Activated naive CD4-positive, alpha-beta T cell treated with anti-CD3 and anti-CD28 coated beads for 36 hours (primary cell): ENCODE measurements at regions of chr6 and their contacts with region 1.

Region 1: DNA sequence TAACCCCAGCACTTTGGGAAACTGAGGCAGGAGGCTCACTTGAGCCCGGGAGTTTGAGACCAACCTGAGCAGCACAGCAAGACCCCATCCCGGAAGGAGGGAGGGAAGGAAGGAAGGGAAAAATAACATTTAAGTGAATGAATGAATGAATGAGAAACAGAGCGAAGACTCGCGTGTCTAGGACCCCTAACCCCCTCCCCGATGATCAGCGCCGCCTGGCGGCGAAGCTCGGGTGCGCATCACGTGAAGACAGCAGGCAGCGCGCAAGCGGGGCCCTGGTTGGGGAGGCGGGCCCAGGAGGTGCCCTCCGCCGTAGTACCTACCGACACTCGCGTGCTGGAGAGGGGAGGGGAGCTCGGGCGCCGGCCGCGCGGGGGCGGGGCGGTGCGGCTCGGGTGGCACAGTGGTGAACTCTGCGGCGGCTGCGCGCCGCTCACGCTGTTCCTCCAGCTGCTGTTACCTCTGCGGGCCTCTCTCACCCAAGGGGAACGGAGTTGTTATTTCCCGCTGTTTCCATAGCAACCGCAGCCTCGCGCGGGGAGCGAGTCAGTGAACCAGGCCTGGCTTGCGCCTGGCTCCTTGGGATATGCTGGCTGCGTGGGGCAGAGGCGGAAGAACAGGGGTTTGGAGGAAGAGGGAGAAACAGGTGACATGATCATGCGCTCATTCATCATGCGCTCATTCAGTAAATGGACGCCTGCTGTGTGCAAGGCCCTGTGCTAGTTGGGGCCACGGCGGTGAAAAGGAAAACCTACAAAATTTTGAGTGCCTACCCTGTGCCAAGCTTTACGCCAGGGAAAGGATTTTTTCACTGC is 2.0 kb upstream of the DCDC2 start:
- DNase-seq: peak; percentile 93
- H3K4me3 Mint-ChIP-seq: peak overlapping the region; percentile 79
- H3K27ac Mint-ChIP-seq: peak overlapping the region; percentile 28
- H3K4me1 Mint-ChIP-seq: peaks cover 25% of the 10 kb centered on the region
- H3K27me3 Mint-ChIP-seq: peaks cover 9% of the 10 kb centered on the region

Region 2: GRCh38 chr6:23980965-23981364 is 378.9 kb before region 1 on chr6:
- CTCF ChIA-PET with region 1: no interaction called
- intact Hi-C with region 1: no loop called
- DNase-seq: no peak
- H3K4me3 Mint-ChIP-seq: no peak overlapping the region
- H3K27ac Mint-ChIP-seq: no peak overlapping the region
- H3K4me1 Mint-ChIP-seq: no peaks in the 10 kb centered on the region
- H3K27me3 Mint-ChIP-seq: no peaks in the 10 kb centered on the region

Region 3: DNA sequence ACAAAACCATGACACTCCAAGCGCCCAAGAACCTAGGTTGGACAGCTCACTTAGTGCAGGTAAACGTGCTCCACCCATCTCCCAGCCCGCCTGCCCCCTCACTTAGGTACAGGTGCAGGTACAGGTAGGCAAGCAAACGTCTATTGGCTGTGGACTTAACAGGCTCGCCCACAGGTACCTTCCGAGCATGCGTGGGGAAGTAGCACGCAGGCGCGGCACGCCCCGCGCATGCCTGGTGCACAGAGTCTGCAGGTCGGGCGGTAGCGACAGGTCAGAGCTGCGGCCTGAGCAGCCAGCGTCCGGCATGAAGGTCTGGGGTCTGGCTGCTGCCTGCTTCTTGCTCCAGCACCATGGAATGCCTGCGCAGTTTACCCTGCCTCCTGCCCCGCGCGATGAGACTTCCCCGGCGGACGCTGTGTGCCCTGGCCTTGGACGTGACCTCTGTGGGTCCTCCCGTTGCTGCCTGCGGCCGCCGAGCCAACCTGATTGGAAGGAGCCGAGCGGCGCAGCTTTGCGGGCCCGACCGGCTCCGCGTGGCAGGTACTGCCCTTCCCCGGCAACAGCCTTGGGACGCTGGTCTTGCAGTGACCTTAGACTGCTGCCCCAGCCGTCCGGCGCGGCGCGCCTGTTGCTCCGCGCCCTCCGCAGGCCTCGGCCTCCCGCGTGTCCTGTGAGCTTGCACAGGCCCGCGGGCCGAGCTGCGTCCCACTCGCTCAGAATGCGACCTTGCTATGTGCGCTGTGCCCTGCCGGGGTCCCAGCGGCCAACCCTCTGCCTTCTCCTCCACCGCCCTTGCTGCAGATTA is 43.1 kb after region 1 on chr6 and contains the start of gene MRS2:
- CTCF ChIA-PET with region 1: interaction called, 3 read pairs
- intact Hi-C with region 1: loop called (anchors 1 kb)
- DNase-seq: peak; percentile 76
- H3K4me3 Mint-ChIP-seq: peak within 1 kb of the TSS; percentile 86
- H3K27ac Mint-ChIP-seq: peak within 1 kb of the TSS; percentile 36
- H3K4me1 Mint-ChIP-seq: peaks cover 30% of the 10 kb centered on the region
- H3K27me3 Mint-ChIP-seq: peaks cover 9% of the 10 kb centered on the region
- total RNA-seq, gene MRS2: 18.9 to 19.8 TPM